ENCODE measurements at regions of chr17 and their contacts with region 1.

Region 1: DNA sequence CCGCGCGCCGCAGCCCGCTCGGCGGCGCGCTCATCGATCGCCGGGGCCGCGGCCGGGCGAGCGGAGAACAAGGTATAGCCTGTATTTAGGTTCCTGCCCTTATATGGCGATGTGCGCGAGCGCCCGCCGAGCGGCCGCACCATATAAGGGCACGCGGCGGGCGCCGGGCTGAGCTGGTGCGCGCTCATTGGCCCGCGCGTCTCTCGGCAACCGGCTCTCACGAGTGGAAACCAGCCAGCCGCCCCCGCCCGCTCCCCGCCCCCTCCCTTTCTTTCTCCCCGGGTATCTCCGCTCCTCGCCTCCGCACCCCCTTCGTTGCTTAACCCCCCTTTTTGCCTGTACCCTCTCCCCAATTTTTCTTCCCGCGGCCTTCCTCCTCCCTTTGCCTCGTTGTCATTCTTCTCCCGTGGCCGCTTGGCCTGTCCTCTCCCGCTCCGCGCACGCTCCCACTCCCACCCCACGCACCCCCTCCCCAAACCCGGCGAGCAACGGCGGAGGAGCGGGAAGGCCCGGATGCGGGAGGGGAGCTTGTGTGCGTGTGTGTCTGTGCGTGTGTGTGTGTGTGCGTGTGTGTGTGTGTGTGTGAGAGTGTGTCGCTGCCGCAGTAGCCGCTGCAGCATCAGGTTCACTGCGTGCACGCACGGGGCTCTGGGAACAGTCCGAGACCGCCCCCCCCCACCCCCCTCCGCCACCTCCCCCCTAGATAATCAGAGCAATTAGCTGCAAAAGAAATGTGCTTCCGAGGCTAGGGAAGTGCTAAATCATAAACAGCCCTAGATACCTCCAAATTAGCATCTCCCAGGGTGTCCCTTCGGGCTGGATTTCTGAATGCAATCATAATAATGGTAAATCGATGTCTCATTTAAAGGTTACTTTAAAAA is 13.5 kb upstream of the CBX8 start:
- DNase-seq: peak; percentile 88 to 95 (median 92)
- ATAC-seq: peak; percentile 95
- H3K4me3 ChIP-seq: peak overlapping the region; percentile 49
- H3K27ac ChIP-seq: peak overlapping the region; percentile 91; the same call in 2 of the 3 replicates
- H3K4me1 ChIP-seq: peaks cover 37 to 78% of the 10 kb centered on the region in 2 experiments
- H3K27me3 ChIP-seq: no peaks in the 10 kb centered on the region
- CTCF ChIP-seq: no peak
- EP300 ChIP-seq: no peak; the same call in 1 of the 2 replicates
- POLR2A ChIP-seq: peak; percentile 46
- RAD21 ChIP-seq: no peak

Region 2: DNA sequence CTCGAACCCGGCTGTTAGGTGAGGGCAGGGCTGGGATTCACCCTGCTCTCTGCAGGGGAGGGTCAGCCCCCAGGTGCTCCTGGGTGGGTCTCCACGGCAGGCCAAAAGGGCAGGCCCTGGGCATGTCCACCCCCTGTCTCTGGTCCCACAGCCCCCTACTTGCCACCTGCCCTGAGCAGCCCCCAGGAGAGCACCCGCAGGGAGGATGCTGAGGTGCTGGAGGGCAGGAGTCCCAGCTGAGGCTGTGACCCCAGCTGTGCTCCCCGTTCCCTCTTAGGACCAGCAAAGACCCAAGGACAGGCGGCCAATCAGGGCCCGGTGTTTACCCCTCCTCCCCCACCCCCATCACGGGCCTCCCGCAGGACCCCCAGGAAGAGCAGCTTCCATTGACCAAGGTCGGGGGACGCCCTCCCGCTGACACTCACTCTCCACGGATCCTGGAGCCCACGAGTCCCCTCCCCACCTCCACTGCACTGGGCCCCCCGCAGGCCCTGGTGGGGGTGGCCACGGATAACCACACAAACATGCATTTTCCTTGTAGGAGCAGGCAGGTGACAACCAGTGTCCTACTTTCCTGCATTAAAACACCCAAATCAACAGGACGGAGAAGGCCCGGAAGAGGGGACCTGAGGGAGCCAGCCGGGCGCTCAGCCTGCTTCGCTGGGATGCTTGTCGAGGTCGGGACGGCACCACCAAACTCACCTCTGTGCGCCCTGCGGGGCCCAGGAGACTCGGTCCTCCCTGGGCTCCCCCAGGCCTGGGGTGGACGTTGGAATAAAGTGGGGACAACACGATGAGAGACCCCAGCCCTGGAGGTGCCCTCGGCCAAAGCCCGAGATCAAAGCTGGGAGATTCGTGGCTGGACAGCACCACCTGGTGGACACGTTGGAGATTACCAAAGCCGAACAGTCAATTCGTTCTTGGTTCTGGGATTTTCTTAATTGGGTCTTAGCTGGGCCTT is 102.2 kb before region 1 on chr17:
- CTCF ChIA-PET with region 1: no interaction called
- POLR2A ChIA-PET with region 1: no interaction called
- in situ Hi-C with region 1: no loop called
- intact Hi-C with region 1: no loop called
- DNase-seq: peak; percentile 62 to 70 (median 67)
- ATAC-seq: peak; percentile 79
- H3K4me3 ChIP-seq: no peak overlapping the region
- H3K27ac ChIP-seq: no peak overlapping the region
- H3K4me1 ChIP-seq: peaks cover 0 to 30% of the 10 kb centered on the region in 2 experiments; a peak in 2 of 5 replicates
- H3K27me3 ChIP-seq: peaks cover 6 to 24% of the 10 kb centered on the region in 2 experiments; a peak in 3 of 5 replicates
- CTCF ChIP-seq: peak; percentile 73 to 82 (median 76)
- EP300 ChIP-seq: no peak
- POLR2A ChIP-seq: no peak
- RAD21 ChIP-seq: peak; percentile 35 to 77

Region 3: DNA sequence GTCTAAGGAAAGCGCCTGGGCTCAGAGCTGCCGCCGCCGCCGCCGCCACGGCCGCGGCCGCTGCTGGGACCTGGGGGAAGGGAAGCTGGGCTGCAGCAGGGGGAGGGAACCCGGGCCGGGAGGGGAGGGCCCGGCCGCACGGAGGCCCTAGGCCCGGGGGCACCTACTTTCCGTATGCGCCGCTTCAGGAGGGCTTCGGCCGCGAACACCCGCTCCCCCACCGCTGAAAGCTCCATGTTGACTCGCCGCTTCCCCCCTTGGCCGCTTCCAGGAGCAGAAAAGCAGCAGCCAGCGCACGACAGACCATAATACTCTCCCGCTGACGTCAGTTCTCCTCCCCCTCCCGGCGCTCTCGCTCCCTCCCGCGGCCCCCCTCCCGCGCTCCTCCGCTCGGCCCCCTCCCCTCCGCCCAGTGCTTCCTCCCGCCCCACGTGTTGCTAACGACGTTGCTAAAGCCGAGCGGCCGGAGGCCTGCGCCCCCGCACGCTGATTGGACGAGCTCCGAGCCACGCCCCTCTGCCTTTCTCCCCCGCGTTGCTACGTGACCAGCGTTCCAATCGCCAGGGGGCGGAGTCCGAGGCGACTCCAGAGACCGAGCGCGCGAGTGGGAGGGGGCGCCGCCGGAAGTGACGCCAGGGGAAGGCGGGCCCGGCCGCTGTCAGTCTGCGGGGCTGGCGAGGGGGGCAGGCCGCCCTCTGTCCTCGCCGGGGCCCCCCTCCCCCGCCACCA is 13.4 kb before region 1 on chr17 and contains the start of gene CBX8:
- CTCF ChIA-PET with region 1: no interaction called
- POLR2A ChIA-PET with region 1: interaction called, 10 read pairs
- in situ Hi-C with region 1: no loop called
- intact Hi-C with region 1: no loop called
- DNase-seq: peak; percentile 95 to 100 (median 98)
- ATAC-seq: peak; percentile 93
- H3K4me3 ChIP-seq: peak within 1 kb of the TSS; percentile 84
- H3K27ac ChIP-seq: peak within 1 kb of the TSS; percentile 96
- H3K4me1 ChIP-seq: peaks cover 21 to 71% of the 10 kb centered on the region in 2 experiments
- H3K27me3 ChIP-seq: no peaks in the 10 kb centered on the region
- CTCF ChIP-seq: peak in 1 of 3 experiments; percentile 18; a peak in 2 of 6 replicates
- EP300 ChIP-seq: no peak; the same call in 1 of the 2 replicates
- POLR2A ChIP-seq: peak; percentile 80
- RAD21 ChIP-seq: no peak; a peak in 2 of 4 replicates
- polyA plus RNA-seq, gene CBX8: 0.08 to 0.21 TPM

Region 4: DNA sequence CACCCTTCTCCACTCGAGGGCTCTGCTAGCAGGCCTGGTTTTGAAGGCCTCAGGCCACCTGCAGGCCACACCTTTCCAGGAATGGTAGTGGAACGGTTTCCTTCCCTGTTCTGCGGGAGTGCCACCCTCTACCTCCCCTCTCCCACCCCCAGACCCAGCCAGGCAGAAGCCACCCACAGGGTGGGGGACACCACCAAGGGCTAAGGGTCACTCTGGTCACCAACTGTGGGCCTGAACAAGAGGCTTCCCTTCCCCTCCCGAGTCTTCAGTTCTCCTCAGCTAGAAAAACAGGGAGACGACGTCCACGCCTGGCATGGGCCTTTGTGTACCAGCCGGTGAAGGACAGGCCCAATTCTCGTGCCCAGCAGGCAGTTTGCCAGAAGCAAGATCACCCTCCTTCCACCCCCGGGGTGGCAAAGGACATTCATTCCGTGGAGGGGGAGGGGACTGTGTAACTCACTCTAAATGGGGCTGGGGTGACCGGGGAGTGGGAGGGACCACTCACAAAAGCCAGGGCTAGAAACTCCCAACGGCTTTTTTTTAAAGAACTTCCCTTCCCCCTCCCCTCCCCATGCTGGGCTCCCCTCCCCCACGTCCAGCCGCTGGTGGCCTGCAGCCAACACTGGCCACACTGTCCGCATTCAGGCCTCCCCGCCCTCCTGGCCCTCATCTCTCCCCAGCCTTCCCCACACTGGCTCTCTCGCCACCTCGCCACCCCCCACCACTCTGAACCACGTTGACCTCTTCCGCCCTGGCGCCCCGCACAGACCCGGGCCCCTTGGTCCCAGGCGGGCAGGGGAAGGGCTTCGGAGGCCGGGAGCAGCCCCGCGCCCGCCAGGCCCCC is 21.2 kb after region 1 on chr17:
- CTCF ChIA-PET with region 1: interaction called, 4 read pairs
- POLR2A ChIA-PET with region 1: interaction called, 386 read pairs
- in situ Hi-C with region 1: no loop called
- intact Hi-C with region 1: loop called (anchors 2 kb)
- DNase-seq: peak; percentile 68 to 93 (median 82)
- ATAC-seq: peak; percentile 67
- H3K4me3 ChIP-seq: peak overlapping the region; percentile 48
- H3K27ac ChIP-seq: peak overlapping the region; percentile 99
- H3K4me1 ChIP-seq: peaks cover 68 to 93% of the 10 kb centered on the region in 2 experiments
- H3K27me3 ChIP-seq: no peaks in the 10 kb centered on the region
- CTCF ChIP-seq: no peak
- EP300 ChIP-seq: peak; percentile 71
- POLR2A ChIP-seq: peak; percentile 73
- RAD21 ChIP-seq: peak in 1 of 2 experiments; percentile 5; a peak in 1 of 4 replicates

Region 5: GRCh38 chr17:79915850-79916430 is 105.6 kb after region 1 on chr17:
- CTCF ChIA-PET with region 1: interaction called, 5 read pairs
- POLR2A ChIA-PET with region 1: interaction called, 3 read pairs
- in situ Hi-C with region 1: no loop called
- intact Hi-C with region 1: loop called (anchors 5 kb)
- DNase-seq: peak; percentile 71 to 84 (median 82)
- ATAC-seq: peak; percentile 90
- H3K4me3 ChIP-seq: no peak overlapping the region
- H3K27ac ChIP-seq: no peak overlapping the region
- H3K4me1 ChIP-seq: peaks cover 0 to 22% of the 10 kb centered on the region in 2 experiments; a peak in 2 of 5 replicates
- H3K27me3 ChIP-seq: peaks cover 2 to 70% of the 10 kb centered on the region in 2 experiments; a peak in 3 of 5 replicates
- CTCF ChIP-seq: peak; percentile 66 to 81 (median 72)
- EP300 ChIP-seq: no peak
- POLR2A ChIP-seq: no peak
- RAD21 ChIP-seq: peak; percentile 88 to 92

Region 6: GRCh38 chr17:79970576-79971068 is 160.3 kb after region 1 on chr17:
- CTCF ChIA-PET with region 1: no interaction called
- POLR2A ChIA-PET with region 1: no interaction called
- in situ Hi-C with region 1: no loop called
- intact Hi-C with region 1: loop called (anchors 10 kb)
- DNase-seq: peak in 2 of 4 experiments; percentile 48 to 72
- ATAC-seq: peak; percentile 76
- H3K4me3 ChIP-seq: no peak overlapping the region
- H3K27ac ChIP-seq: no peak overlapping the region
- H3K4me1 ChIP-seq: peaks cover 0 to 2% of the 10 kb centered on the region in 2 experiments; a peak in 1 of 5 replicates
- H3K27me3 ChIP-seq: peaks cover 30 to 48% of the 10 kb centered on the region in 2 experiments
- CTCF ChIP-seq: peak; percentile 72 to 75 (median 74)
- EP300 ChIP-seq: no peak
- POLR2A ChIP-seq: no peak
- RAD21 ChIP-seq: peak in 1 of 2 experiments; percentile 40; a peak in 2 of 4 replicates

Region 7: DNA sequence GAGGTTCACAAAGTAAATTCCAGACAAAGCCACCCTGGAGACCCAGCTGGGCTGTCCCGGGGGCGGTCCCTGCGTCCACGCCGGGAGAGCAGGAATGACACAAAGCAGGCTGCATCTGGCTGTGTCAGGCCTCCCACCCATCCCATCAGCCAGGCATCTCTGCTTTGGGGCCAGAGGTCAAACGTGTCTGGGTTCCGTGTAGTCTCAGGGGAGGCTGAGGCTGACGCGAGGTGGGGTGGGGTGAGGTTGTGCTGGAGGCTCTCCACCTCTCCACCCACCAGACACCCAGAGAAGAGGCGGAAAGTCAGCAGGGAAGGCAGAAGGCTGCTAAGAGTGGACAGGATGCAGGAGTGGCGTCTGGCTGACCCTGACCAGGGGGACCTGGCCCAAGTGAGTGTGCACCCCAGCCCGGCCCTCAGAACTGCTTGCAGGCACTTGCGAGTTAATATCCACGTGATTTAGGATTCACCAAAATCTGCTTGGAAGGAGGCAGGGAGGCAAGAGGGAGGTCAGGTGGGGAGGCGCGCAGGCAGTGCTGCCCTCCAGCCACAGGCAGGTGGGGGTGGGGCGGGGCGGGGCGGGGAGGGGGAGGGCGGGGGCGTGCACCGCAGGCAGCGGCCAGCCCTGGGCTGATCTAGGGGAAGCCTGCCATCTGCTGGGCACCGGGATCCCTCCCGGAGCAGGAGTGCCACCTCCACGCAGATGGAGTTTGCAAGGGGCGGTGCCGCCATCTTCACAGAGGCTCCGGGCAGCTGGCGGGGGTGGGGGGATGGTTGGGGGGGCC is 181.0 kb after region 1 on chr17:
- CTCF ChIA-PET with region 1: no interaction called
- POLR2A ChIA-PET with region 1: no interaction called
- in situ Hi-C with region 1: no loop called
- intact Hi-C with region 1: loop called (anchors 5 kb)
- DNase-seq: peak; percentile 73 to 92 (median 89)
- ATAC-seq: peak; percentile 91
- H3K4me3 ChIP-seq: no peak overlapping the region
- H3K27ac ChIP-seq: no peak overlapping the region
- H3K4me1 ChIP-seq: peaks cover 16 to 38% of the 10 kb centered on the region in 2 experiments
- H3K27me3 ChIP-seq: peaks cover 42 to 69% of the 10 kb centered on the region in 2 experiments
- CTCF ChIP-seq: peak in 2 of 3 experiments; percentile 58 to 66; a peak in 4 of 6 replicates
- EP300 ChIP-seq: no peak
- POLR2A ChIP-seq: no peak
- RAD21 ChIP-seq: peak in 1 of 2 experiments; percentile 50; a peak in 2 of 4 replicates

Measured in K562 (cell line).